Activated CD4-positive, alpha-beta T cell treated with anti-CD3 and anti-CD28 coated beads for 36 hours (primary cell): ENCODE measurements at regions of chr6 and their contacts with region 1.

Region 1: GRCh38 chr6:135145063-135145800 is 35.9 kb upstream of the MYB start:
- DNase-seq: no peak
- ATAC-seq: peak; percentile 52
- H3K4me3 Mint-ChIP-seq: peak overlapping the region; percentile 2
- H3K27ac Mint-ChIP-seq: peak overlapping the region; percentile 88
- H3K4me1 Mint-ChIP-seq: peaks cover 65% of the 10 kb centered on the region
- H3K27me3 Mint-ChIP-seq: no peaks in the 10 kb centered on the region

Region 2: GRCh38 chr6:135128268-135128914 is 16.8 kb before region 1 on chr6:
- CTCF ChIA-PET with region 1: interaction called, 13 read pairs
- POLR2A ChIA-PET with region 1: interaction called, 10 read pairs
- intact Hi-C with region 1: loop called (anchors 1 kb)
- DNase-seq: peak; percentile 83
- ATAC-seq: peak; percentile 97
- H3K4me3 Mint-ChIP-seq: peak overlapping the region; percentile 54
- H3K27ac Mint-ChIP-seq: peak overlapping the region; percentile 87
- H3K4me1 Mint-ChIP-seq: peaks cover 44% of the 10 kb centered on the region
- H3K27me3 Mint-ChIP-seq: no peaks in the 10 kb centered on the region

Region 3: GRCh38 chr6:135162678-135163439 is 17.6 kb after region 1 on chr6:
- CTCF ChIA-PET with region 1: interaction called, 18 read pairs
- POLR2A ChIA-PET with region 1: no interaction called
- intact Hi-C with region 1: loop called (anchors 1 kb)
- DNase-seq: peak; percentile 67
- ATAC-seq: no peak
- H3K4me3 Mint-ChIP-seq: peak overlapping the region; percentile 24
- H3K27ac Mint-ChIP-seq: peak overlapping the region; percentile 94
- H3K4me1 Mint-ChIP-seq: peaks cover 64% of the 10 kb centered on the region
- H3K27me3 Mint-ChIP-seq: no peaks in the 10 kb centered on the region

Region 4: GRCh38 chr6:135170849-135171248 is 25.6 kb after region 1 on chr6:
- CTCF ChIA-PET with region 1: interaction called, 6 read pairs
- POLR2A ChIA-PET with region 1: no interaction called
- intact Hi-C with region 1: loop called in 1 of 2 experiments (anchors 1 kb)
- DNase-seq: peak; percentile 63
- ATAC-seq: peak; percentile 89
- H3K4me3 Mint-ChIP-seq: peak overlapping the region; percentile 20
- H3K27ac Mint-ChIP-seq: peak overlapping the region; percentile 88
- H3K4me1 Mint-ChIP-seq: peaks cover 25% of the 10 kb centered on the region
- H3K27me3 Mint-ChIP-seq: no peaks in the 10 kb centered on the region

Region 5: DNA sequence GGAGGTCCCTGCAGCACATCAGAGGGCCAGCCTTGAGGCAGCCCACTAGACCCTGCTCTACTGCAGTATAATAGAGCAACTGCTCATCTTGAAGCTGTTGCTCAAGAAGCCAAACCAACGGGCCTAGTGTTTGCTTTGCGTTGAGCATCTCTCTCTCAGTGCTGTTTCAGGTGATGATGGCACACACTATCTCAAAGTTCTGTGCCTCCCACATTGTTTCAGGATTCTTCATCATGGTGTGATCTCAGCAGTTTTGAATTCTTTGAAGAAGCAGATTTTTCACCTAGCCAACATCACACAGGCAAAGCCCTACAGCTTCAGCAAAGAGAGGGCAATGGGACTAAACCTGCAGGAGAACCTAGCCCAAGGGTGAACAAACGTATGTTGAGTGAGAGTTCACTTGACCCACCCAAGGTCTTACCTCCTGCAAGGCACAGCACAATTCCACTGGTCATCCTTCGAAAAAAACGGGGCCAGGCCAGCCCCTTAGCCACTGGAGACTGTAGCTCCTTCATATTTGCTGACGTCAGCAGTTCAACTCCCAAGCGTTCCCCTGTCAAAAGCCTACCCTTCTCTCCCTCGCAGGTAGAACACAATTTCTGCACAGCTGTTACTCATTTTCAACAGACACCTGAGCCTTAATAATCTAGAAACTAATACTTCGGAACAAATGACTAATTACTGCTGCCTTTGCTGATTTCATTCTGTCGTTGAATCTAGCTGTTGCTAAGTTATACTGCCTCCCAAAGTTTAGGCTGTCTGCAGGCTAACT is 51.7 kb after region 1 on chr6:
- CTCF ChIA-PET with region 1: interaction called, 5 read pairs
- POLR2A ChIA-PET with region 1: no interaction called
- intact Hi-C with region 1: loop called in 1 of 2 experiments (anchors 1 kb)
- DNase-seq: peak; percentile 53
- ATAC-seq: peak; percentile 92
- H3K4me3 Mint-ChIP-seq: no peak overlapping the region
- H3K27ac Mint-ChIP-seq: peak overlapping the region; percentile 64
- H3K4me1 Mint-ChIP-seq: peaks cover 22% of the 10 kb centered on the region
- H3K27me3 Mint-ChIP-seq: no peaks in the 10 kb centered on the region

Region 6: DNA sequence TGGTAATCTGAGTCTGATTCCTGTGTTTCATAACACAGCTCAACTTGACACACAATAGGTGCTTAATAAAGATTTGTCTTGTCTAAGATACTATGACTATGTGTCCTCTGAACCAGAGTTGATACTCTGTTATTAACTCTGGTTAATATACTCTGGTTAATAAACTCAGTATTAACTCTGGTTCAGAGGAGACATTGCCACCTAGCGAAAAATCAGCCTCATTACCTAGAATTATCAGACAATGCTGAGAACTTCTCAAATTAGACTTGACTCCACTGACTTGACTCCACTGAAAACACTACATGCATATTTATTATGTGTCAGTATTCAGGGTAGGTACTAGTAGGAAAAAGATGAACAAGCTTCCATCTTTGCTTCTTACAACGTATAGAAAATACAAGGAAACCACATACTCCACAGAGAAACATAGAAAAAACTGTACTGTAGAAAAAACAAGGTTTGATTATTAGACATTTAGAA is 278.5 kb after region 1 on chr6:
- CTCF ChIA-PET with region 1: interaction called, 3 read pairs
- POLR2A ChIA-PET with region 1: no interaction called
- intact Hi-C with region 1: loop called (anchors 2 to 5 kb)
- DNase-seq: no peak
- ATAC-seq: peak; percentile 78
- H3K4me3 Mint-ChIP-seq: no peak overlapping the region
- H3K27ac Mint-ChIP-seq: no peak overlapping the region
- H3K4me1 Mint-ChIP-seq: peaks cover 5% of the 10 kb centered on the region
- H3K27me3 Mint-ChIP-seq: no peaks in the 10 kb centered on the region

Region 7: GRCh38 chr6:135438907-135439535 is 293.8 kb after region 1 on chr6:
- CTCF ChIA-PET with region 1: no interaction called
- POLR2A ChIA-PET with region 1: no interaction called
- intact Hi-C with region 1: loop called in 1 of 2 experiments (anchors 5 kb)
- DNase-seq: no peak
- ATAC-seq: peak; percentile 46
- H3K4me3 Mint-ChIP-seq: no peak overlapping the region
- H3K27ac Mint-ChIP-seq: peak overlapping the region; percentile 66
- H3K4me1 Mint-ChIP-seq: peaks cover 20% of the 10 kb centered on the region
- H3K27me3 Mint-ChIP-seq: no peaks in the 10 kb centered on the region